A549 (cell line): ENCODE measurements at regions of chr15 and their contacts with region 1.

Region 1: DNA sequence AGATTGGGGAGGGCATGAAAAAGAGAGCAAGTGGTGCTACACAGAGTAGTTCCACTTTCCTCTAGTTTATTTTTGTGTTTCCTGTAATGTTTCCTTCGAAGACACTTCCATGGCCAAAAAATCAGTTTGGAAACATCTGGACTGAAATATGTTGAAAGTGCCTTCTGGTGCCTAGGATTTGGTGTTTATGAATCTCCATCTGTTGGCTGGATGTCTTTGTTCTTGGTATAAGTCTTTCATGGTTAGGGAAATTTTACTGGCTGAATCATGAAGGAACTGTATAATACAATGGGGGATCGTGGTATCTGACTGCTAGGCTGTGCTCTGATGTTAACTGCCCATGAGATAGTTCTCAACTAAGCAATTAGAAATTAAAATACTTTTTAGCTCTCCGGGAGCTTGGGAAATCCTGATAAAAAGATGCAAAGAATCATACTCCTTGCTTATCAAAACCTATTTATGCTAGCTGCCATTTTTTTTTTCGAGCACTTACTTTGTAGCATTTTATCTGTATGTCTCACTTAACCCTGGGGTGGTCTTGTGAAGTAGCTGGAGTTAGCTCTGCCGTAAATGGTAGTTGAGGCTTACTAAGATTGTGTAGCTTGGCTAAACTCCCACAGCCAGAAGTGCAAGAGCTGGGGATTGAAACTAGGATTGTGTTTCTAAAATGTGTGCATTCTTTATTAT is 21.9 kb downstream of the AKAP13 start:
- DNase-seq: no peak
- ATAC-seq: no peak
- H3K4me3 ChIP-seq: no peak overlapping the region
- H3K27ac ChIP-seq: 0 out of 6 replicates have a peak overlapping the region, but pooled peaks of 1 of the 2 experiments have one; percentile 1
- H3K4me1 ChIP-seq: peaks cover 59% of the 10 kb centered on the region
- CTCF ChIP-seq: no peak
- EP300 ChIP-seq: no peak
- POLR2A ChIP-seq: no peak
- RAD21 ChIP-seq: no peak

Region 2: DNA sequence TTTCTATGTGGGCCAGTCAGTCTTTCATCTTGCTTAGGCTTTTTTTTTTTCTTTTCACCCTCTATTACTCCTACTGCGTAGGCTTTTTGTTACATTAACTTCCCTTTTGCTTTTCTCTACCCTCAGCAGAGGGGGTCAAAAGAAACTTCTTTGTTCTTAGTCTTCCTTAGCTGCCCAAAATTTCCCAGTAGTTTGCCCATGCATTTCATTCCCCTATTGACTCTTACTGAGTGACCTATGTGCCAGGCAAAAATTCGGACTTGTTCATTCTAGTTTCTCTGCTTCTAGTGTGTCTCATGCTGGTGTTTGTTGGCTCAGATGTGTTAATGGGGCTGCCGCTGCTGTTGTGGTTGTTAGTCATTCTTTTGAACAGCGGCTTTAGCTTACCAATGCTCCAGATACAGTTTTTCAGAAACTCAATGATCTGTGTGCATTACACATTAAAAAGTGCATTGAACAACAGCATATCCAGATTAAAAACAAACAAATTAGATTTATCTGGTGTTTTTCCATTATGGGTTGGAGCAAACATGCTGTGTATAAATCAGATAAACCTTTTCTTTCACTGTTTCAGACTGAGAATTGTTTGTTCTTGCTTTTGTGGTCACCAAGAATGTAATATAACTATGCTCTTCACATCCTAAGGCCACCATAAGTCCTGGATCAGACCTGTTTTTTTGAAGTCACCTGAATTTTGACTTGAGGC is 377.7 kb before region 1 on chr15:
- CTCF ChIA-PET with region 1: no interaction called
- POLR2A ChIA-PET with region 1: no interaction called
- DNase-seq: peak; percentile 41 to 51
- ATAC-seq: peak; percentile 55 to 67; a peak in 5 of 6 replicates
- H3K4me3 ChIP-seq: 0 out of 3 replicates have a peak overlapping the region, but pooled peaks have one; percentile 3
- H3K27ac ChIP-seq: peak overlapping the region; percentile 49 to 66
- H3K4me1 ChIP-seq: peaks cover 76% of the 10 kb centered on the region
- CTCF ChIP-seq: no peak
- EP300 ChIP-seq: no peak
- POLR2A ChIP-seq: no peak
- RAD21 ChIP-seq: no peak

Region 3: DNA sequence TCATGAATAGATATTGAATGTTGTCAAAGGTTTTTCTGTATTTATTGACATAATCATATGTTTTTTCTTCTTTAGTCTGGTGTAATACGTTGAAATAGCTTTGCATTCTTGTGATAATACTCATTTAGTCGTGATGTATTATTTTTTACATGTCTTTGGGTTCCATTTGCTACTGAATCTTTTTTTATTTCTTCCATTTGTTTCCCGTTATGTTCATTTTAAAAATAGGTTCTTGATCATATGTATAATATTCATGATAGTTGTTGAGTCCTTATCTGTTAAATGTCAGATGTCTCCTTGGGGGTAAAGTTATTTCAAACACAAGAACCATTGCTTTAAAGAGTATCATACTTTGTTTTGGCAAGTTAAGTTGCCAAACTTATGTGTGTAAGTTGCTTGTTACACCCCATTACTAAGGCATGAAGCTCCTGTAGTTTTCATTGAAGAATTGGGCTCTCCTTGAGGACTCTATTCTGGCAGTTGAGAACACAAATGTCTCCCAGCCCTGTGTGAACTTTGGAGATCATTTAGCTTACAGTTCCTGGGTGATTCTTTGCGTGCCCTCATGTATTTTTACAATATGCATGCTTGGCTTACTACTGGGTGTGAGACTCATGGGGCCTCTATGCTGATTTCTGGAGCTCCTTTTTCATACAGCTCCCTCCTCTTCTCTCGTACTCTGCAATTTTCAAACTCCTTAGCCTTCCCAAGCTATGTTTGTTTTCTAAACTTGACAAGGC is 13.6 kb before region 1 on chr15:
- CTCF ChIA-PET with region 1: interaction called, 11 read pairs
- POLR2A ChIA-PET with region 1: no interaction called
- DNase-seq: no peak
- ATAC-seq: no peak
- H3K4me3 ChIP-seq: no peak overlapping the region
- H3K27ac ChIP-seq: no peak overlapping the region
- H3K4me1 ChIP-seq: peaks cover 40% of the 10 kb centered on the region
- CTCF ChIP-seq: no peak
- EP300 ChIP-seq: no peak
- POLR2A ChIP-seq: no peak
- RAD21 ChIP-seq: no peak